Spleen (tissue), 13 donors: ENCODE measurements at regions of chr16 and their contacts with region 1.

Region 1: DNA sequence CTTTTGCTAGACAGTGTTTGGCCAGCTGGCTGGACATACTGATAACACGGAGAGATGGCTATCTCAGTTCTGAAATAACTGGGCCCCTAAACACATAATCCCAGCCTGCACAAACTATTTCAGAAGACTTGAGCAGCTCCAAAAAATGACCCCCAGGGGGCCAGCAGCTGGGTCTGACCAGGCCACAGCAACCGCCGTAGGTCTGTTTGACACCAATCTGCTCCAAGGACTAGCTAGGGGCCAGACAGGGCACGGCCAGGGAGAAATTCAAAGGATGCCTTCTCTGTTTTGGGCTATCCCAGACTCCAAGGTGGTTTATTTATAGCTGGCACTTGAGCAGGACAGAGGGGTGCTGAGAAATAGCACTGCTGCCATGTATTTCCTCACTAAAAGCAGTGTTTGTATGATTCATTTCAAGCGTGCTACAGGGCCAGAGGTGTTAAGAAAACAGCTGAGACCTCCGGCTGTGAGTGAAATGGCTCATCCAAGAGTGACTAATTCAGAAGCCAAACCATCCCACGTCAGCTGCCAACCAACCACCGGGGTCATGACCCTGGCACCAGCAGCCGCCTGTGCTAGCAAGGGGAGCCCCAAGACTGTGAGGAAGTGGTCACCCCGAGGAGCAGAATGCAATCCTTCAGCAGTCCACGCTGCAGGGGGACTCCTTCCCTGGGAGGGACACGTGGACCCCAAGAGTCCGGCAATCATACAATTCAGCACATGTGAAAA is 5.7 kb downstream of the GGA2 start:
- DNase-seq: peak; percentile 86
- H3K4me3 ChIP-seq: peak overlapping the region in 2 of 8 donors; percentile 21 to 99
- H3K27ac ChIP-seq: peak overlapping the region; percentile 11 to 96 (median 68)
- H3K4me1 ChIP-seq: peaks cover 69 to 100% (median 97%) of the 10 kb centered on the region in 6 donors
- H3K27me3 ChIP-seq: no peaks in the 10 kb centered on the region
- CTCF ChIP-seq: no peak
- POLR2A ChIP-seq: no peak

Region 2: DNA sequence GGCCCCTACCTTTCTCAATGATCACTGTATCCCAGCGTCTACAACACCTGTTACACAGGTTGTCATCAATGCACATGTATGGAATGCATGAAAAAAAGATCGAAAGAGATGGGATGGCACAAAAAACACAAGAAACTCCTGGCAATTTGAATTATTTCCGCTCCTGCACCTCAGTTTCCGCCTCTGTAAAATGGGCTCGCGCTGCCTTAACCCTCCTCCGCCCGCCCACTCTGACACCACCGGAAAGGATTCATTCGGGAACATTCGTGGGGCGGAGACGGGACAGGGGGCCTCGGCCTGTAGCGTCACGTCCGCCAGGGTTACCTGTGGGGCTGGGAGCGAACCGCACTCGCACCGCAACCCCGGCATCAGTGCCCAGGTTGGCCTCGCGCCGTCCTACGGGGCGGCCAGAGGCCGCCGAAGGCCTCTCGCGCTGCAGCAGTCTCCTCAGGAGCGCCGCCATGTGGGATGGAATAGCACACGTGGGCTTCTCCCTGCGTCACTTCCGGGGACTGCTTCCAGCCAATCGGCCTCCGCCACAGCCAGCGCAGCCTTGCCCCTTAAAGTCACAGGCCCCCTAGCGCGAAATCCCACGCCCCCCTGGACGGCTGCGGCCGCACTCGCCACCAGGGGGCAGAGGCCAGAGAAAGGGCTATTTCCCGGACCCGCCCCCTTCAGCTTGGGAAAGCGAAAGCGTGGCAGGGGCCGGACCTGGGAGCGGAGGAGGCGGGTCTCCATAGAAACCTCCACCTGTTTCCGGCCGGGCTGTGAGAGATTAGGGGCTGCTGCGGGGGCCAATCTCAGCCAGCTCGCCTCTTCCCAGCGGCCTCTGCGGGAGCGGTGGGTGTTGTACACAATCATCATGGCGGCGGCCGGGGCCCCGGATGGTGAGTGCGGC is 52.5 kb after region 1 on chr16 and contains the starts of genes EARS2 and UBFD1:
- intact Hi-C with region 1: loop called (anchors 10 kb)
- DNase-seq: peak; percentile 99
- H3K4me3 ChIP-seq: peak within 1 kb of the TSS; percentile 85 to 100 (median 94)
- H3K27ac ChIP-seq: peak within 1 kb of the TSS; percentile 80 to 93 (median 90)
- H3K4me1 ChIP-seq: peaks cover 20 to 59% (median 41%) of the 10 kb centered on the region in 6 donors
- H3K27me3 ChIP-seq: no peaks in the 10 kb centered on the region
- CTCF ChIP-seq: peak; percentile 97 to 100 (median 99)
- POLR2A ChIP-seq: no peak
- total RNA-seq, gene EARS2: 10.7 to 21.8 (median 19.3) TPM
- total RNA-seq, gene UBFD1: 39.0 to 63.7 (median 43.4) TPM

Region 3: GRCh38 chr16:23595951-23596720 is 91.5 kb after region 1 on chr16 and contains the start of gene NDUFAB1:
- intact Hi-C with region 1: loop called (anchors 10 kb)
- DNase-seq: peak; percentile 99
- H3K4me3 ChIP-seq: peak within 1 kb of the TSS; percentile 89 to 99 (median 95)
- H3K27ac ChIP-seq: peak within 1 kb of the TSS; percentile 59 to 88 (median 85)
- H3K4me1 ChIP-seq: peaks cover 15 to 61% (median 37%) of the 10 kb centered on the region in 6 donors
- H3K27me3 ChIP-seq: no peaks in the 10 kb centered on the region
- CTCF ChIP-seq: peak; percentile 99 to 100 (median 100)
- POLR2A ChIP-seq: peak in 1 of 3 donors; percentile 9
- total RNA-seq, gene NDUFAB1: 40.1 to 91.0 (median 49.0) TPM

Region 4: DNA sequence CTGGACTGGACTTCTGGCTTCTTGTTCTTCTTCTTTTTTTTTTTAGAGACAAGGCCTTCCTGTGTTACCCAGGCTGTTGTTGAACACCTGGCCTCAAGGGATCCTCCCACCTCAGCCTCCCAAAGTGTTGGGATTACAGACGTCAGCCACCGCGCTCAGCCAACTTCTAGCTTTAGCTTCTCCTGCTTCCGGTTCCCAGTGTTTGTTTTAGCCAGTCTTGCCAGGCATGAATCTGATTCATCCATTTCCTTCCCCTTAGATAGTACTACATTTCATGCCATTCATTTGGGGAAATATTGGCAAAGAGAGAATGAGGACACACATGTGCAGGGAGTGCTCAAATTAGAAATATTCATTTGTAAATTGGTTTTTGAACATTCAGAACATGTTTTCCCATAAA is 103.6 kb after region 1 on chr16:
- intact Hi-C with region 1: no loop called
- DNase-seq: no peak
- H3K4me3 ChIP-seq: no peak overlapping the region
- H3K27ac ChIP-seq: no peak overlapping the region
- H3K4me1 ChIP-seq: no peaks in the 10 kb centered on the region
- H3K27me3 ChIP-seq: no peaks in the 10 kb centered on the region
- CTCF ChIP-seq: no peak
- POLR2A ChIP-seq: no peak